Naive thymus-derived CD4-positive, alpha-beta T cell (primary cell): ENCODE measurements at regions of chr12 and their contacts with region 1.

Region 1: DNA sequence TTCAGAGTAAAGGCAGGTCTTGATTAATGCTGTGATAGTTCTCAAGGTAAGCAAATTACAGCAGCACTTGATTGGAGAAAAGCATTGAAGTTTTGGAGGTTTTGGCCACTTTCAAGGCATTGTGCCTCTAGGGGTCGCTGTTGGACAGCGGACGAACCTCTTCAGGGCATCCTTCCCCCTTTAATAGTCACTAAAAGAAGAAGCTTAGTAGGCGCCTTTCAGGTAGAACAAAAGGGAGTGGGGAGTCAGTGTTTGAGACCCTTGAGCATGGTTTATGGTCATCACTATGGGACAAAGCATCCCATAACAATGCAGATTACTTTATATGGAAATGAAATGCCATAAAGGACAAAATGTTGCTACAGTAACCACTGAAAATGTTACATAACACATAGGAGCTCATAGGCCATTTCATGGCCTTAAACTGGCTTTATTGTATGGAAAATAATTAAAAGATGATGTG is 199.5 kb upstream of the DCN start:
- DNase-seq: peak; percentile 67 to 89 (median 78)
- ATAC-seq: peak; percentile 94
- H3K4me3 ChIP-seq: peak overlapping the region; percentile 18
- H3K4me3 Mint-ChIP-seq: peak overlapping the region; percentile 69 to 91 (median 81)
- H3K27ac ChIP-seq: no peak overlapping the region
- H3K27ac Mint-ChIP-seq: peak overlapping the region in 8 of 9 donors; percentile 16 to 85 (median 49)
- H3K4me1 ChIP-seq: no peaks in the 10 kb centered on the region
- H3K4me1 Mint-ChIP-seq: peaks cover 0 to 11% (median 6%) of the 10 kb centered on the region in 7 donors
- H3K27me3 ChIP-seq: no peaks in the 10 kb centered on the region
- H3K27me3 Mint-ChIP-seq: peaks cover 0 to 13% (median 0%) of the 10 kb centered on the region in 5 donors

Region 2: DNA sequence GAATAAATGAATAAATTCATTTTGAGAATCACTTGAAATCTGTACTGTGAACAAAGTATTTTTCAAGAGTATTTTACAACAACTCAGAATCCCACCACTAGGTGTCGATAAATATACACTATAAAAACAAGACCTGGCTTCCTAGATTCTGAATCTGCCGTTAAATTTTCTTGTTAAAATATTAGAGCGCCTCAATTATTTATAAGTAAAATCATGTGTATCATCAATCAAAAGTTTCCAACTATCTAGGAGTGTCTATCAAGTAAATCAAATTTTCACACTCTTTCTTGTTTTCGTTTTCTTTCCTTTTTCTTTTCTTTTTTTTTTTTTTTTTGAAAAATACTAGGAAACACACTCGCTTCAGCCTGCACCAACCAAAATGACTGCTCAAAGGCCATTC is 20.2 kb before region 1 on chr12:
- CTCF ChIA-PET with region 1: interaction called, 6 read pairs
- POLR2A ChIA-PET with region 1: interaction called, 5 read pairs
- intact Hi-C with region 1: loop called in 1 of 2 experiments (anchors 1 kb)
- DNase-seq: peak in 7 of 9 donors; percentile 15 to 57 (median 46)
- ATAC-seq: peak; percentile 63
- H3K4me3 ChIP-seq: no peak overlapping the region
- H3K4me3 Mint-ChIP-seq: peak overlapping the region in 1 of 10 donors; percentile 11
- H3K27ac ChIP-seq: no peak overlapping the region
- H3K27ac Mint-ChIP-seq: peak overlapping the region in 1 of 9 donors; percentile 41
- H3K4me1 ChIP-seq: no peaks in the 10 kb centered on the region
- H3K4me1 Mint-ChIP-seq: peaks cover 0 to 4% (median 3%) of the 10 kb centered on the region in 7 donors
- H3K27me3 ChIP-seq: no peaks in the 10 kb centered on the region
- H3K27me3 Mint-ChIP-seq: peaks cover 0 to 16% (median 0%) of the 10 kb centered on the region in 5 donors

Region 3: DNA sequence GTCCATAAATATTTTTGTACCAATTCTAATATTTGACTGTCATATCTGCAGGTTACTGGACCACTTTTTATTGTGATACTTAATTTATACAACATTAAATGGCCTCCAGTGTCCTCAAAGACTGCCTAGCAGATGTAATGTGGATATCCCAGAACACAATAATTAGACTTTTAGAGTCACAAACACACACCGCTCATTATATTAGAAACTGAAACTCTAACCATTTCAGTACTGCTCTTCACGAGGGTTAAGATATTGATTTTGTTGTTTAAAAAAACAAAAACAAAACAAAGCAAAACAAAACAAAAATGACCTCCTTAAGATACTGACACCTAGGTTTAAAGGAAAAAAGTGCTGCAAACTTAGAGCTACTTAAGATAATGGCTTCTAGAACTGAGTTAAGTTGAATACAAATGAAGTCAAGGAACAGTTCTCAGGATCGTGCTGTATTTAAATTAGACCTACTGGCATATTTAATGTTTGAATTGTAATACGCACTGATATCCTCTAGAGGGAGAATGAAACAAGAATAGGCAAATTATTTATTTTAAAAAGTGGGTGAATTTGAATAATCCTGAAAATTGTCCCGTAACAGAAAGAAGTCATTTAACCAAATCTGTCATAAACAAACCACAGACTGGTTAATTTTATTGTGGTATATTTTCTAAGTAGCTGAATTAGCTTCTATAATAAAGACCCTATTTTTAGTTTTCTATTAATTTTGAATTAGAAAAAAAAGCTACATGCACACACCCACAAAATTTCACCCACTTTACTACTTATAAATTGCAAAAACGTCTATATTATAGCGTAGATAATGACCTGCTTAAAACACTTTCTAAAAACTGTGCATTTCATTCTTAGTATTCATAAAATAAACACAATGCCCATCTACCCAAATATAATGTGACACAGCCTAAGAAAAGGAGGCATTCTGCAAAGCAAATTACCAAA is 195.8 kb after region 1 on chr12:
- CTCF ChIA-PET with region 1: interaction called, 8 read pairs
- POLR2A ChIA-PET with region 1: no interaction called
- intact Hi-C with region 1: loop called (anchors 1 to 5 kb)
- DNase-seq: peak in 6 of 9 donors; percentile 30 to 53 (median 39)
- ATAC-seq: peak; percentile 88
- H3K4me3 ChIP-seq: peak overlapping the region; percentile 39
- H3K4me3 Mint-ChIP-seq: peak overlapping the region; percentile 16 to 93 (median 84)
- H3K27ac ChIP-seq: no peak overlapping the region
- H3K27ac Mint-ChIP-seq: peak overlapping the region; percentile 14 to 94 (median 81)
- H3K4me1 ChIP-seq: peaks cover 0 to 5% of the 10 kb centered on the region in 2 donors
- H3K4me1 Mint-ChIP-seq: peaks cover 12 to 36% (median 19%) of the 10 kb centered on the region in 7 donors
- H3K27me3 ChIP-seq: no peaks in the 10 kb centered on the region
- H3K27me3 Mint-ChIP-seq: peaks cover 0 to 3% (median 0%) of the 10 kb centered on the region in 5 donors

Region 4: DNA sequence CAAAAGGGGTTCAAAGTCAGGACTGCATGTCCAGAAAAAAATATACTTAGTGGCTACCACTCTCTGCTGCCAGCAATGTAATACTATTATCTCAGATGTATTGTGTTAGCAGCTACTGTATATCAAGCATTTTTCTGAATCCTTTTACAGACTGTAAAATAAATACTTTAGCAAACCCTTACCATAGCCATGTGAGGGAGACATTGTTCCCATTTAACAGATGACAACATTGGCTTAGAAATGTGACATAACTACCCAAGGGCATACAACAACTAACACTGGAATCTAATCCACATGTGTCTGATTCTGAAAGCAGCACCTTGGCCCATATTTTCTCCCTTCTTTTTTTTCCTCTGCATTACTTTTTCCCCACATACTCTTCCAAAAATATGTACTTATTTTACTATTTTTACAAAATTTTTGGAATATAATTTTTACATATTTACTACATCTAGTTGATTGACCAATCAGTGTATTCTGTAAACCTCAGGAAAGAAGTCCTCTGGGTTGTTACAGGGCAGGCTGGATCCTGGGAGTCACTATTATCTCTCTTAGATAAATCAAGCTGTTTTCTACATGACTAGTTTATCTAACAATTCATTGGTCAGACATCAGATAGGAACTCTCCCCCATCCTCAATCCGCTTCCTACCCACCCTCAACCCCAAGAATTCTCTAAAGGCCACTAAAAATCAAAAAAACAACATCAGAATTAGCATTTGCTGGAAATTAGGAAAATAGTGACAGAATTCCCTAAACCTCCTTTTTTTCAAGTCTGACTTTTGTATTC is 609.5 kb after region 1 on chr12:
- CTCF ChIA-PET with region 1: no interaction called
- POLR2A ChIA-PET with region 1: no interaction called
- intact Hi-C with region 1: loop called (anchors 1 to 10 kb)
- DNase-seq: peak in 5 of 9 donors; percentile 22 to 64 (median 48)
- ATAC-seq: peak; percentile 83
- H3K4me3 ChIP-seq: no peak overlapping the region
- H3K4me3 Mint-ChIP-seq: peak overlapping the region in 5 of 10 donors; percentile 18 to 50 (median 32)
- H3K27ac ChIP-seq: peak overlapping the region; percentile 26
- H3K27ac Mint-ChIP-seq: peak overlapping the region in 7 of 9 donors; percentile 8 to 92 (median 70)
- H3K4me1 ChIP-seq: peaks cover 9 to 27% of the 10 kb centered on the region in 2 donors
- H3K4me1 Mint-ChIP-seq: peaks cover 9 to 92% (median 79%) of the 10 kb centered on the region in 7 donors
- H3K27me3 ChIP-seq: no peaks in the 10 kb centered on the region
- H3K27me3 Mint-ChIP-seq: no peaks in the 10 kb centered on the region

Region 5: DNA sequence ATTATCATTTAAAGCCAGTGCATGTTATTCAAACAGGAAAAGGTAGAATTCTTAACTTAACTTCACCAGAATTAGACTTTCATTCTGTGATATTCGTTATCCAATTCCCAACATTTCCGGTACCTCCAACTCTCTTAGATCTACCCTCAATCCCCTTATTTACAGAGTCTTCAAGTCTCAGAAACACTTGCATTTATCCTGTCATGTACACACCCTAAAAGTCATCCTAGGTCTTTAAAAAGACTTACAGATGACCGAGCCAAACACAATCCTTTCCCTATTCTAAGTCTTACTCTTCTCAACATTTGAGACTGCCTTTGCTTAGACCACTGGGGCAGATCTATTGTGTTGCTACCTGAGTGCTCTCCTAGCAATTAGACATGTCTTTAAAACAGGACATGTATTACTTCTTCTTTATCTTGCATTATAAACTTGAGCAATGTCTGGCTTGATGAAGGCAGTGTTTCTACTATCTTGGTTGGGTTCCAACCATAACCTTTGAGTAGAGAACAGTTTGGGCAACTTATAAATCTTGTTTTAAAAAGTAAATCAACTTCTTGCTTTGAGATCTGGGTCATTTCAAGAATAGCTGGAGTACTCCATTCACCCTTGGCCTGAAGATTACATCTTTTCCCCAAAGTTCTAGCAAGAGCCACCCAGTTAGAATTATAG is 1180.1 kb after region 1 on chr12:
- CTCF ChIA-PET with region 1: interaction called, 12 read pairs
- POLR2A ChIA-PET with region 1: no interaction called
- intact Hi-C with region 1: no loop called
- DNase-seq: no peak
- ATAC-seq: no peak
- H3K4me3 ChIP-seq: no peak overlapping the region
- H3K4me3 Mint-ChIP-seq: no peak overlapping the region
- H3K27ac ChIP-seq: no peak overlapping the region
- H3K27ac Mint-ChIP-seq: peak overlapping the region in 3 of 9 donors; percentile 4 to 65 (median 57)
- H3K4me1 ChIP-seq: peaks cover 3 to 4% of the 10 kb centered on the region in 2 donors
- H3K4me1 Mint-ChIP-seq: peaks cover 9 to 53% (median 31%) of the 10 kb centered on the region in 7 donors
- H3K27me3 ChIP-seq: no peaks in the 10 kb centered on the region
- H3K27me3 Mint-ChIP-seq: no peaks in the 10 kb centered on the region

Region 6: GRCh38 chr12:92649511-92650227 is 1267.6 kb after region 1 on chr12:
- CTCF ChIA-PET with region 1: interaction called, 28 read pairs
- POLR2A ChIA-PET with region 1: interaction called, 3 read pairs
- intact Hi-C with region 1: loop called (anchors 1 kb)
- DNase-seq: peak; percentile 8 to 70 (median 58)
- ATAC-seq: peak; percentile 96
- H3K4me3 ChIP-seq: no peak overlapping the region
- H3K4me3 Mint-ChIP-seq: peak overlapping the region in 1 of 10 donors; percentile 21
- H3K27ac ChIP-seq: no peak overlapping the region
- H3K27ac Mint-ChIP-seq: peak overlapping the region in 6 of 9 donors; percentile 7 to 79 (median 20)
- H3K4me1 ChIP-seq: no peaks in the 10 kb centered on the region
- H3K4me1 Mint-ChIP-seq: peaks cover 4 to 11% (median 6%) of the 10 kb centered on the region in 7 donors
- H3K27me3 ChIP-seq: no peaks in the 10 kb centered on the region
- H3K27me3 Mint-ChIP-seq: no peaks in the 10 kb centered on the region

Region 7: DNA sequence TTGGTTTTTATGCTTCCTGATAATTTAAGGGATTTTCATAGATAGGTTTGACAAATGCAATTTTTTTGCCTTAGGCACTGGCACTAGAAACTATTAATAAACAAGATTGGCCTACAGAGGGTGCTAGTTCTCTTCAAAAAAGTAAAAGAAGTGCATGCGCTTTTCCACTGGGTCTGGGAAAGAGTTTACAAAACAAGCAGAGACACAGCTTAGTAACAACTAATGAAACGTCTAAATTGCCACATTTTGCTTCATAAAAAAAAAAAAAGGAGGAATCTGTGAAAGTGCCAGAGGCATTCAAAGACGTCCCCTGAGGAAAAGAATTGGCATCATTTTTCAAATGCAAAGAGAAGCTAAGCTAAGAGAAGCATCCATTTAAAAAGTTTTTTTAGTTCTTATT is 1605.2 kb after region 1 on chr12:
- CTCF ChIA-PET with region 1: no interaction called
- POLR2A ChIA-PET with region 1: no interaction called
- intact Hi-C with region 1: loop called in 1 of 2 experiments (anchors 1 kb)
- DNase-seq: peak in 7 of 9 donors; percentile 41 to 66 (median 56)
- ATAC-seq: peak; percentile 81
- H3K4me3 ChIP-seq: no peak overlapping the region
- H3K4me3 Mint-ChIP-seq: peak overlapping the region in 9 of 10 donors; percentile 18 to 80 (median 65)
- H3K27ac ChIP-seq: no peak overlapping the region
- H3K27ac Mint-ChIP-seq: peak overlapping the region in 5 of 9 donors; percentile 35 to 68 (median 59)
- H3K4me1 ChIP-seq: peaks cover 0 to 8% of the 10 kb centered on the region in 2 donors
- H3K4me1 Mint-ChIP-seq: peaks cover 5 to 13% (median 12%) of the 10 kb centered on the region in 7 donors
- H3K27me3 ChIP-seq: no peaks in the 10 kb centered on the region
- H3K27me3 Mint-ChIP-seq: peaks cover 0 to 5% (median 0%) of the 10 kb centered on the region in 5 donors